ENCODE measurements at regions of chr3 and their contacts with region 1.

Region 1: GRCh38 chr3:100465892-100466777 is 26.3 kb upstream of the TMEM45A start:
- DNase-seq: no peak
- ATAC-seq: peak; percentile 38
- H3K4me3 ChIP-seq: no peak overlapping the region
- H3K27ac ChIP-seq: no peak overlapping the region
- H3K4me1 ChIP-seq: no peaks in the 10 kb centered on the region
- H3K27me3 ChIP-seq: no peaks in the 10 kb centered on the region
- CTCF ChIP-seq: no peak

Region 2: GRCh38 chr3:100588251-100588650 is 122.1 kb after region 1 on chr3:
- intact Hi-C with region 1: loop called (anchors 5 kb)
- DNase-seq: no peak
- ATAC-seq: no peak
- H3K4me3 ChIP-seq: no peak overlapping the region
- H3K27ac ChIP-seq: no peak overlapping the region
- H3K4me1 ChIP-seq: no peaks in the 10 kb centered on the region
- H3K27me3 ChIP-seq: no peaks in the 10 kb centered on the region
- CTCF ChIP-seq: no peak